ENCODE measurements at regions of chr1 and their contacts with region 1.

Region 1: GRCh38 chr1:32786856-32787255 is 30.3 kb downstream of the YARS1 start:
- DNase-seq: no peak
- H3K4me3 ChIP-seq: no peak overlapping the region
- H3K27ac ChIP-seq: no peak overlapping the region
- H3K4me1 ChIP-seq: peaks cover 54% of the 10 kb centered on the region
- H3K27me3 ChIP-seq: no peaks in the 10 kb centered on the region
- CTCF ChIP-seq: peak; percentile 46

Region 2: DNA sequence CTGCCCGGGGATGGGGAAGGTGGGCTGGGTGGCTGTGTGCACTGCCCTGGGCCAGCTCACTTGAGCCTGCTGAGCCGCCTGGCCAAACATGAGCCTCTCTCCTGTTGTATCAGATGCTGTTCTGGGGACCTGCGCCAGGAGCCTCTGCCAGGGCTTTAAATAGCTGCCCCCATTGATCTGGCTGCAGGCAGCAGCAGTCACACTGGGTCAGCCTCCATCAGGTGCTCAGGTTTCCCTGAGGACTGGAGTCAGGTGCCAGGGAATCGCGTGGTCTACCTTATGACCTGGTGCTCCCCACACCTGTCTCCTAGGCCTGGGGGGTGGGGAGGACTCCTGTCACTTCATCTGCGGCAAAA is 587.2 kb before region 1 on chr1:
- CTCF ChIA-PET with region 1: no interaction called
- POLR2A ChIA-PET with region 1: interaction called, 12 read pairs
- intact Hi-C with region 1: no loop called
- DNase-seq: no peak
- H3K4me3 ChIP-seq: no peak overlapping the region
- H3K27ac ChIP-seq: no peak overlapping the region
- H3K4me1 ChIP-seq: 0 out of 2 replicates have a peak, but pooled peaks cover under 1% of the 10 kb centered on the region
- H3K27me3 ChIP-seq: no peaks in the 10 kb centered on the region
- CTCF ChIP-seq: no peak